ENCODE measurements at regions of chr10 and their contacts with region 1.

Region 1: DNA sequence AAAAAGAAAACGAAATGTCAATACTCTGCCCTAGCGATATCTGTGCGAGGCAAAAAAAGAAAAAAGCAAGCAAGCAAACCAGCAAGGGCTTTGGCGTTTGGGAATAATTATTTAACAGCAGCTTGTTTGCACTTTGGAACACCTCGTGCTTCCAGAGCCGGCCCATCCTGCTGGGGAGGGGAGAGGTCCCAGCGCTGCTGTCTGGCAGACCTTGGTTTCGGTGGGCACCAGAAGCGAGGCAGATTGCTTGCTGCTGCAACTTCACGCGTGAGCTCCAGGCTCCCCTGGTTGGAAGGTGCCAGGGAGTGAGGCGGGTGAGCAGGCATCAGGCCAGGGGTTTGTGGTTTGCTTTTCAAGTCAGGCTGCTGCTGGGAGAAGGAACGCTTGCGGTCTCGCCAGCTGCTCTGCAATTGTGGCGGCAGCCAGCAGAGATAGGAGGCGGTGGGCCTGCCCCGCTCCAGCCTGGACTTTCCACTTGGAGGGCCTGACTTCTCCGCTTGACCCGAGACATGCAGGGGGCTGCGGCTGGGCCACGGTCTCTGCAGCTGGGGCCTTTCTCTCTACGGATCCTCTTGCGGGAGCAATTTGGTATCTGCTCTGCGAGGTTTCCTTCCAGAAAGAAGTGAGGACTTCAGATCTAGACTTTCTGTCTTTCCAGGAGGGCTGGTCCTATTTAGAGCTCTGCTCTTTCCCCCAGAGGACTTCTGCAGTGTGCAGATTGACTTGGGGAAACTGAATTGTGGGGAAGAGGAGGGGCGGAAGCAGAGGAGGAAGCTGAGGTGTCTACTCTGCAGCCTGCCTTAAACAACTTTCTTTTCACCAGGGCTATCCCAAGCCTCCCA is 131.4 kb downstream of the PRPF18 start:
- DNase-seq: peak; percentile 78
- ATAC-seq: peak; percentile 84 to 88

Region 2: DNA sequence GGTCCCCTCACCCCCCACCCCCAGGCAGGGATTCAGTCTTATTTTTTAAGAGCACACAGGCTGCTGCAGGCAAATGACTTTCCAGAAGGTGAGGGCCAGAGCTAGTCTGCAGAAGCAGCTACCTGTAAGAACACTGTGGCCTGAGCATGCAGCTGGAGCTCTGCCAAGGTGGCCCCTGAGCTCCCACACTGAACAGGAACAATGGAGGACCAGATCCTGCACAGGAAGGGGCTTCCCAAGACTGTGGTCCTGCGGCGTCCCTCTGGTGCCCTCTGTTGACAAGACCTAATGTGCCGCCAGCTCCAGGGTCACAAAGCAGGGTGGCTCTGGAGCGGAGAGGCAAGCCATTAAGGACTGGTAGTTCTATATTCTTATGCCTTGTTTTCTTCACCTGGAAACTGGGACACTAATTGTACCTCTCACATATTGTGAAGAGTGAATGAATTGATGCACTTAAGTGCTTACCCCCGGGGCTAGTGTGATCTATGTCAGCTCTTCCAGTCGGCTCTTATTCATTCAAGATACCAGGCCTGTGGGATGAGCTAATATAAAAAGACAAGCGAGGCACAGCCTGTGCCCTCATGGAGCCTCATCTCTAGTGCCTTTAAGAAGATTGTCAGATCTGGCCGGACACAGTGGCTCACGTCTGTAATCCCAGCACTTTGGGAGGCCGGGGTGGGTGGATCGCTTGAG is 181.3 kb before region 1 on chr10:
- intact Hi-C with region 1: no loop called
- DNase-seq: peak; percentile 47
- ATAC-seq: peak; percentile 80 to 81

Region 3: GRCh38 chr10:13659897-13660550 is 58.1 kb before region 1 on chr10:
- intact Hi-C with region 1: loop called in 1 of 2 experiments (anchors 5 kb)
- DNase-seq: peak; percentile 75
- ATAC-seq: peak; percentile 72

Measured in left cardiac atrium (tissue), 4 donors.